Gastrocnemius medialis (tissue), 4 donors: ENCODE measurements at regions of chr10 and their contacts with region 1.

Region 1: DNA sequence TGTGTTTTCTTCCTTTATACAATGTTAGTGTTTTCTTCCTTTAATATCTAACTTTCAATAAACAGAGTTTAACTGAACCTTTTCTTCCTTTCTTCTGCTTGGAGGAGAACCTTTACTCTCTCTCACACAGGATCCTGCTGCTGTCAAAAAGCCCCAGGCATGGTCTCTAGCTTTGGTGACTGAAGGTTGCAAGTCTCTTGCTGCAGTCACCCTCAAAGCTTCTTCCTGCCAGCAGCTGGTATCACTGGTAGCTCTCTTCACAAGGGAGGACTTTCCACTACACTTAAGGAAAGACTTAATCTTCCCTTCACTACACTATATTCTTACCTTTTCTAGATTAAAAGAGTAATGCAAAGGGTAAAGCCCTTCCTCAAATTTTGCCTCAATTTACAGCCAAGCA is 153.4 kb downstream of the SGMS1 start:
- DNase-seq: no peak
- ATAC-seq: no peak
- H3K4me3 ChIP-seq: no peak overlapping the region
- H3K27ac ChIP-seq: no peak overlapping the region
- H3K4me1 ChIP-seq: peaks cover 44 to 54% of the 10 kb centered on the region in 2 donors
- H3K27me3 ChIP-seq: no peaks in the 10 kb centered on the region
- CTCF ChIP-seq: no peak
- POLR2A ChIP-seq: no peak

Region 2: GRCh38 chr10:50497757-50498156 is 27.4 kb after region 1 on chr10:
- in situ Hi-C with region 1: no loop called
- intact Hi-C with region 1: loop called (anchors 2 kb)
- DNase-seq: no peak
- ATAC-seq: peak; percentile 99 to 100
- H3K4me3 ChIP-seq: peak overlapping the region in 2 of 4 donors; percentile 4 to 8
- H3K27ac ChIP-seq: peak overlapping the region; percentile 70 to 82 (median 78)
- H3K4me1 ChIP-seq: peaks cover 4 to 20% of the 10 kb centered on the region in 2 donors
- H3K27me3 ChIP-seq: no peaks in the 10 kb centered on the region
- CTCF ChIP-seq: no peak
- POLR2A ChIP-seq: no peak

Region 3: GRCh38 chr10:50679149-50679548 is 208.8 kb after region 1 on chr10:
- in situ Hi-C with region 1: no loop called
- intact Hi-C with region 1: no loop called
- DNase-seq: no peak
- ATAC-seq: no peak
- H3K4me3 ChIP-seq: no peak overlapping the region
- H3K27ac ChIP-seq: no peak overlapping the region
- H3K4me1 ChIP-seq: no peaks in the 10 kb centered on the region
- H3K27me3 ChIP-seq: no peaks in the 10 kb centered on the region
- CTCF ChIP-seq: no peak
- POLR2A ChIP-seq: no peak